A673 (cell line): ENCODE measurements at regions of chr15 and their contacts with region 1.

Region 1: DNA sequence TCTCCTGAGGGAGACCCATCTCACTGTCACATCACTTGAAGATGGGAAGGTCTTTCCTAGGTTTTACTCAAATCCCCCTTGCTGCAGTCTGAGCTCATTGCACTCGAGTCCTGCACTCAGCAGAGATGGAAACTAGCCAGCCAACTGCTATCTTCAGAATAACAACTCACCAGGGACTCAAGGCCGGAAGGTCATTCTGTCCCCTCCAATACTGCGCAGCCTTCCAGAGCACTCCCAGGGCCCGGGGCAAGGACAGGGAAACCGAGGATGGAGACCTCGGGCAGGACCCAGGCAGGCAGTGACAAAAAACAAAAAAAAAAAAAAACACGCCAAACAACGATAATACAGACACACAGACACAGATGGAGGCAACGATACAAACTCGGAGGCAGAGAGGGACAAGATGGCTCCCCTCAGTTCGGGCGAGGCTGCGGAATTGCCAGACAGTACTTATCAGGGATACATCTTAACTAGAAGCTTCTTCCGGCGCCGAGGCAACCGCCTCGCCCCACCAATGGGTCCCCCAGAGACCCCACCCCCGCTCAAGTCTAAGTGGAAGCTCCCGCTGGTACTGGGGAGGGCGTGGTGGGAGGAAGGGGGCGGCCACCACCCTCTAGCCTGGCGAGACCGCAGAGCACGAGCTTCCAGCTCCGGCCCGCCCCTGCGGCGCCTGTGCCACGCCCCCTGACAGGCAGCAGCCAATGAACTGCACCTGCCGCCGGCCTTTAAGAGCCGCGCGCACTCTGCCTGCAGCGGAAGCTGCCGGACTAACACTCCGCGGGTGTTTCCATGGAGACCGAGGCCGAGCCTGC is 7.0 kb upstream of the MAP1A start:
- DNase-seq: peak; percentile 100
- H3K4me3 ChIP-seq: peak overlapping the region; percentile 49
- H3K27ac ChIP-seq: peak overlapping the region; percentile 71
- H3K4me1 ChIP-seq: peaks cover 43% of the 10 kb centered on the region
- H3K27me3 ChIP-seq: no peaks in the 10 kb centered on the region
- CTCF ChIP-seq: 0 out of 2 replicates have a peak, but pooled peaks have one; percentile 24

Region 2: DNA sequence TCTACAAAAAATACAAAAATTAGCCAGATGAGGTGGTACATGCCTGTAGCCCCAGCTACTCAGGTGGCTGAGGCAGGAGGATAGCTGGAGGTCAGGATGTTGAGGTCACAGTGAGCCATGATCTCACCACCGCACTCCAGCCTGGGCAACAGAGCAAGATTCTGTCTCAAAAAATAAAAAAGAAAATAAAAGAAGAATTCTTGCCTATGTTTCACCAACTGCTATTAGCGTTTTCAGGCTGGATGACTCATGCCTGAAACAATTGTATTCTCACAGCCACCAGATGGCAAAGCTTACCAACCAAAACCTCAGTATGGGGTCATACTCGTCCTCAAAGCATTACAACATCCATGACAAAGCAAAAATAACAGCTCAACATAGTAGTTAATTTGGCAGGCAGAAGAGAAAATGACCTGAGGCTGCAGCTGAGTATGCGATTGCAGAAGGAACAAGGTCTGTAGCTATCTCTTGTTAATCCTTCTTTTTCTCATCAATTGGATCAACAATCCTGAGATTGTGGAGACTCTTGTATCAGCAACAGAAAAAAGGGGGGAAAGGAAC is 69.6 kb before region 1 on chr15:
- CTCF ChIA-PET with region 1: interaction called, 7 read pairs
- POLR2A ChIA-PET with region 1: interaction called, 12 read pairs
- intact Hi-C with region 1: loop called (anchors 10 kb)
- DNase-seq: peak; percentile 94
- H3K4me3 ChIP-seq: no peak overlapping the region
- H3K27ac ChIP-seq: peak overlapping the region; percentile 80
- H3K4me1 ChIP-seq: peaks cover 10% of the 10 kb centered on the region
- H3K27me3 ChIP-seq: no peaks in the 10 kb centered on the region
- CTCF ChIP-seq: peak; percentile 62

Region 3: DNA sequence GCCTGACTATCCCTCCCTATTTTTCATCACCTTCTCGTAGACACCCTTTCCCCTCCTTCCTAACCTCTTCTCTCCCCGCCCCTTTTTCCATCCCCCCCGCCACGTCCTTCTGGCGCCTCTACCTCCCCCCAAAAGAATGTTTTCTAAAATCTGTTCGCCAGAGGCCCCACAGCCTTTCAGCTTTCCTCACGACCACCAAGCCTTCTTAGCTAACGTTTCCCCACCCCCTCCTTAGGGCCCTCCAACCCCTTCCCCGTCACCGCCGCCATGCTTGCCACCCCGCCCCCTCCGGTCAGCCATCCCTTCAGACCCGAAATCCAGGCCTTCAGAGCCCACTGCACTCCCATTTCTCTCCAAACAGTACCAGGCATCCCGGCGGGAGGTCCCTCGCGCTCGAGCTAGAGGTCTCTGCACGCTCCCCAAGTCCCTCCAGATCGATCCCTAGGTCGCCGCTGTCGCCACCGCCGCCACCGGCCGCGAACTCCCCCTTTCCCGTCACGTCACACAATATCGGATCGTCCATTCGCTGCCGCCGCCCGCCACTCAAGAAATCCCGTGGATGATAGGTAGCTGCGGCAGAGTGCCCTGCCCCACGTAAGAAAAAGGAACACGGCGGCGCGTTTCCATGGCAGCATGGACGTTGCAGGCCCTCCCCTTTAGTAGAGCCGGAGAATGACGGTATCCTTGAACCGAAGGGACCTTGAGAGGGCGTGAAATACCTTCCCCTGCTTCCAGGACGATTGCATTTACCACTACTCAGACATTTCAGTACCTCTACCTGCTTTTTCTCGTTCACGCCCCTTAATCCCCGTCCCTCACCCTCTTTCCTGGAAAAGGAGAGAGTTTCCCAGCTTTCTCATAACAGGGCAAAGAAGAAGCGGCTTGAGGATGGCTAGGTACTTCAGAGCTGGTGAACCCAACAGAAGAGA is 17.5 kb before region 1 on chr15 and contains the start of gene TP53BP1:
- CTCF ChIA-PET with region 1: no interaction called
- POLR2A ChIA-PET with region 1: interaction called, 3 read pairs
- intact Hi-C with region 1: loop called (anchors 1 kb)
- DNase-seq: peak; percentile 98
- H3K4me3 ChIP-seq: peak within 1 kb of the TSS; percentile 93
- H3K27ac ChIP-seq: peak within 1 kb of the TSS; percentile 85
- H3K4me1 ChIP-seq: peaks cover 15% of the 10 kb centered on the region
- H3K27me3 ChIP-seq: no peaks in the 10 kb centered on the region
- CTCF ChIP-seq: no peak
- total RNA-seq, gene TP53BP1: 66.0 and 74.5 TPM in 2 replicates

Region 4: GRCh38 chr15:43913026-43913927 is 402.9 kb after region 1 on chr15:
- CTCF ChIA-PET with region 1: no interaction called
- POLR2A ChIA-PET with region 1: no interaction called
- intact Hi-C with region 1: no loop called
- DNase-seq: peak; percentile 87
- H3K4me3 ChIP-seq: no peak overlapping the region
- H3K27ac ChIP-seq: no peak overlapping the region
- H3K4me1 ChIP-seq: peaks cover 4% of the 10 kb centered on the region
- H3K27me3 ChIP-seq: no peaks in the 10 kb centered on the region
- CTCF ChIP-seq: no peak